ENCODE measurements at regions of chr15 and their contacts with region 1.

Region 1: GRCh38 chr15:43903864-43904290 is 77.1 kb downstream of the WDR76 start:
- DNase-seq: peak in 2 of 3 donors; percentile 25 to 73
- ATAC-seq: peak; percentile 68
- H3K4me3 ChIP-seq: no peak overlapping the region
- H3K4me1 ChIP-seq: no peaks in the 10 kb centered on the region
- CTCF ChIP-seq: peak; percentile 64

Region 2: GRCh38 chr15:44066316-44066740 is 162.5 kb after region 1 on chr15:
- intact Hi-C with region 1: loop called (anchors 10 kb)
- DNase-seq: peak in 1 of 3 donors; percentile 80
- ATAC-seq: peak; percentile 81
- H3K4me3 ChIP-seq: no peak overlapping the region
- H3K4me1 ChIP-seq: no peaks in the 10 kb centered on the region
- CTCF ChIP-seq: no peak

Region 3: DNA sequence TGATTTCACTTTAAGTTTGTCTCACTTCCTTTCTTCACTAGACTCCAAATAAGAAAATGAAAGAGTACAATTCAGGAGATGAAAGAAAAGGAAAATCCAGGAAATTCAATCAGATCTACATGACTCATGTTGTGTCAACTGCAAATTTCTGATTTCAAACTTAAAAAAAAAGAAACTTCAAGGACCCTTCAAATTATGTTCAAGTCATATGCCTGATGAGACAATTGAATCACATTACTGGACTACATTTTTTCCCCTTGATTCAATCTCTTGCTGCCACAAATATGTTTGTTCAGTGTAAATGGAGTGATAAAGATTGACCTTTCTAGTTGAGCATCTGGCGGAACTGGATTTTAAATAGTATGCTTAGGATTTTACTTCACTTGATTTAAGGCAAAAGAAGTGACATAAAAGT is 253.8 kb after region 1 on chr15:
- intact Hi-C with region 1: no loop called
- DNase-seq: no peak
- ATAC-seq: peak; percentile 61
- H3K4me3 ChIP-seq: no peak overlapping the region
- H3K4me1 ChIP-seq: no peaks in the 10 kb centered on the region
- CTCF ChIP-seq: no peak

Measured in mucosa of descending colon (tissue), 3 donors.